PC-3 (cell line): ENCODE measurements at regions of chr12 and their contacts with region 1.

Region 1: DNA sequence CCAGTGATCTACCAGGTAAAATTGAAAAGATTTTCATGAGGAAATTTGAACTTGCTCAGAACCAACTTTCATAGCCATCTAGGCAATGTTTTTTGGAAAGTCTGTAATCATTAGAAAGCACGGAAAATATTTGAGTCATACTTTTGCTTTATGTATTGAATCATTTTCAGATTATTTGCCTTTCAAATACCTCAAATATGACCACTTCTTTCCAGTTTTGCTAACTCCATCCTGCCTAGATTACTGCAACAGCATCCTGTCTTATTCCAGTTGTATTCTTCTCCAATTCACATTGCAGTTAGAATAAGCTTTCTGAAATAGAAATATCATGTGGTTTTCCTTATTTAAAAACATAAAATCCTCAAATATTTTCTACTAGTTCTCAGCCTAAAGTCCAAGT is 239.8 kb upstream of the FAR2 start:
- DNase-seq: peak; percentile 95
- ATAC-seq: peak; percentile 83
- H3K4me3 ChIP-seq: no peak overlapping the region
- H3K27ac ChIP-seq: peak overlapping the region; percentile 67
- H3K4me1 ChIP-seq: peaks cover 30% of the 10 kb centered on the region
- H3K27me3 ChIP-seq: no peaks in the 10 kb centered on the region
- CTCF ChIP-seq: no peak

Region 2: DNA sequence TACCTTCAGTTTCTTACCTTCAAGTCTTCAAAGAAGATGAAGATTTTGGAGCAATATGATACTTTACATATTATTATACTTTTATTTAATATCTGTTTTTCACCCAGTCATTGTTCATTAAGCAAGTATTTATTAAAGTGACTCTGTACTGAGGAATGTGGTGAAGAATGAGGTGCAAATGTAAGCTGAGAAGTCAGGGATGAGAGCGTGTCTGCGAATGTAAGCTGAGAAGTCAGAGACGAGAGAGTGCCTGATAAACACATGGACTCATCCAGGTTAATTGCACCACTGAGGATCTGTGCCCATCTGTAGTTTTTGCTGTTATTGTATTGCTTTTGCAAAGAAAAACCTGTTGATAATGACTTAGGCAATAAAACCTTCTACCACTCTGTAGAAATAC is 27.9 kb after region 1 on chr12:
- CTCF ChIA-PET with region 1: no interaction called
- POLR2A ChIA-PET with region 1: no interaction called
- intact Hi-C with region 1: loop called (anchors 1 kb)
- DNase-seq: peak; percentile 76
- ATAC-seq: peak; percentile 58
- H3K4me3 ChIP-seq: no peak overlapping the region
- H3K27ac ChIP-seq: no peak overlapping the region
- H3K4me1 ChIP-seq: peaks cover 22% of the 10 kb centered on the region
- H3K27me3 ChIP-seq: no peaks in the 10 kb centered on the region
- CTCF ChIP-seq: no peak

Region 3: GRCh38 chr12:28951935-28952334 is 42.6 kb after region 1 on chr12:
- CTCF ChIA-PET with region 1: no interaction called
- POLR2A ChIA-PET with region 1: no interaction called
- intact Hi-C with region 1: no loop called
- DNase-seq: peak; percentile 37
- ATAC-seq: peak; percentile 58; the same call in 1 of the 2 replicates
- H3K4me3 ChIP-seq: no peak overlapping the region
- H3K27ac ChIP-seq: no peak overlapping the region
- H3K4me1 ChIP-seq: no peaks in the 10 kb centered on the region
- H3K27me3 ChIP-seq: no peaks in the 10 kb centered on the region
- CTCF ChIP-seq: no peak

Region 4: DNA sequence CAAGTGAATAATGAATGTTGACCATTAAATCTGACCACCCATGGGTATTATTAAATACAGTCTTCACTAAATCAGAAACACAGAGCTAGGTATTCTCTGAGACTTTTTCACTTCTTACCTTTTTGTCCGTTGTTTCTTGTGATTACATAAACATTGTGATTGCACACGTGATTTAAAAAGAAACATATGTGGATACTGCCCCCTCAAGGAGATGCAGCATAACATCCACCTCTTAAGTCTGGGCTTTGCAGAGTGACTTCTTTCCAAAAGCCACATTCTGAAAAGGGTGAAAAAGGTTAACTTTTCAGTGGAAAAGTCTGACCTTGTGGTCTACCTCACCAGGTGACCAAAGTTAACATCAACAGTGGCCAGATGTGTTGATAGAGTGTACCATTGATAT is 54.3 kb after region 1 on chr12:
- CTCF ChIA-PET with region 1: interaction called, 3 read pairs
- POLR2A ChIA-PET with region 1: no interaction called
- intact Hi-C with region 1: loop called (anchors 1 kb)
- DNase-seq: peak; percentile 95
- ATAC-seq: peak; percentile 63
- H3K4me3 ChIP-seq: no peak overlapping the region
- H3K27ac ChIP-seq: no peak overlapping the region
- H3K4me1 ChIP-seq: peaks cover 19% of the 10 kb centered on the region
- H3K27me3 ChIP-seq: no peaks in the 10 kb centered on the region
- CTCF ChIP-seq: peak; percentile 100

Region 5: GRCh38 chr12:29041621-29042020 is 132.3 kb after region 1 on chr12:
- CTCF ChIA-PET with region 1: no interaction called
- POLR2A ChIA-PET with region 1: no interaction called
- intact Hi-C with region 1: loop called (anchors 1 kb)
- DNase-seq: peak; percentile 99
- ATAC-seq: peak; percentile 85
- H3K4me3 ChIP-seq: peak overlapping the region; percentile 34; the same call in 1 of the 2 replicates
- H3K27ac ChIP-seq: peak overlapping the region; percentile 88
- H3K4me1 ChIP-seq: peaks cover 49% of the 10 kb centered on the region
- H3K27me3 ChIP-seq: no peaks in the 10 kb centered on the region
- CTCF ChIP-seq: no peak